ENCODE measurements at regions of chr10 and their contacts with region 1.

Region 1: DNA sequence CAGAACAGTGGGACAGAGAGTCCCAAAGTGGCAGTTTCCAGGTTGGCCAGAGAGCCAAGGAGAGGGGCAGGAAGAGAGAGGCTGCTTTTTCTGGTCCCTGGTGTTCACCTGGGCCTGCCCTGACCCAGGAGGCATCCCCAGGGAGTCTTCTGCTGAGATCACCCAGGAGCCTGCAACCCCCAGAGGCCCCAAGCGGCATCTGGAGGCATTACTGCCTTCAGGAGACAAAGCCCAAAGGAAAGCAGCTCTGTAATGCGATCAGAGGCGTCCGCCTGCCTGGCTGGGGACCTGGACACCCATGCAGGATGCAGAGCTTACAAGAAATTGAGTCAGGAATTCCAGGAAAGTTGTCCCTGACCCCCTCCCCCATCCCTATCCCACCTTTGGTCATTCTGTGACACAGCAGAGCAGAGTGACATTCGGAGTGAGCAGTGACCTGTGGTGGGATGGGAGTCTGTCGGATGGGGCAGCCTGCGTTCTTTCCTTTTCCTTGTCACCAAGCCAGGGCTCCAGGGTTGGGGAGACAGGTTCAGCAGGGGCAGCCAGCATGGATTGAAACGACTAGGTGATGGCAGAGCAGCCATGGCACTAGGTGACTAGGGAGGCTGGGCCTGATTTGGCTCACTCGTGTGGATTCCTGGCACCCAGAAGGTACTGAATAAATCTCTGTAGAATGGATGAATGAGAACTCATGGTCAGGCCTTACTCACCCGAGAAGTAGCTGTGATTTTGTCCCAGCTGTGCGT is 10.4 kb downstream of the UNC5B start:
- DNase-seq: no peak
- H3K4me3 ChIP-seq: no peak overlapping the region
- H3K27ac ChIP-seq: no peak overlapping the region; the same call in 1 of the 2 replicates
- H3K4me1 ChIP-seq: peaks cover 8 to 33% (median 14%) of the 10 kb centered on the region in 4 experiments
- H3K27me3 ChIP-seq: no peaks in the 10 kb centered on the region
- CTCF ChIP-seq: peak; percentile 37 to 47 (median 38)
- EP300 ChIP-seq: no peak
- POLR2A ChIP-seq: no peak
- RAD21 ChIP-seq: peak; percentile 11 to 43; a peak in 2 of 4 replicates

Region 2: DNA sequence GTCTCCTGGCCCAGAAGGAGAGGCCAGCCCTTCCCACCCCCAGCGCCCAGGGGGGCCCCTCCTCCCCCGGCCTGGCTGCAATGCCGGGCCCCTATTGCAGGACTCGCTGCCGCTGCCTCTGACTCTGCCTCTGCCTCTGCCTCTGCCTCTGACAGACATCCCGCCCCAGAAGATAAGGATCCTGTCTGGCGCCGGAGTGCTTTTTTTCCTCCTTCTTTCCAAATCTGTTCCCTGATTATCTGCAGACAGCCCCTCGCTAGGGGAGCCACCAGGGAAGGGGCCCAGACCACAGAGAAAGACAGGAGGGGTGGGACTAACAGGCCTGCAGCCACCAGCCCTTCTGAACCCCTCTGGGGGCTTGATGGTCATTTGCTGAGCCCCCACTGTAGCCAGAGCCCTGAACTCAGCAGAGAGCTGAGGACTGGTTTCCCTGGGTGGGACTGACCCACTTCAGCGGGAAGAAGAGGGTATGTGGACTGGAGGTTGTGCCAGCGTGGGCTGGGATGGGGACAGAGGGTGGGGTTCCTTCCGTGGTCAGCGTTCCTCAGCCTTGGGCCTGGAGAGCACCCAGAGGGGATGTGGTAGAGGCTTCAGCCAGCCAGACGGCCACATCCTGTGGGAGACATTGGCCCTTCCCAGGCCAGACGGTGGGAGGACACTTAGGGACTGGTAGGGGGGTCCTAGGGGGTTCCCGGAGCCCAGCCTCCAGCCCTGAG is 12.4 kb after region 1 on chr10:
- CTCF ChIA-PET with region 1: interaction called, 58 read pairs
- POLR2A ChIA-PET with region 1: interaction called, 13 read pairs
- DNase-seq: no peak
- H3K4me3 ChIP-seq: no peak overlapping the region
- H3K27ac ChIP-seq: no peak overlapping the region
- H3K4me1 ChIP-seq: peaks cover 7 to 17% (median 13%) of the 10 kb centered on the region in 4 experiments
- H3K27me3 ChIP-seq: 0 out of 7 replicates have a peak, but pooled peaks cover 0 to 2% (median 0%) of the 10 kb centered on the region in 4 experiments
- CTCF ChIP-seq: no peak
- EP300 ChIP-seq: no peak
- POLR2A ChIP-seq: no peak
- RAD21 ChIP-seq: no peak

Region 3: GRCh38 chr10:71244431-71245419 is 22.0 kb after region 1 on chr10:
- CTCF ChIA-PET with region 1: interaction called, 16 read pairs
- POLR2A ChIA-PET with region 1: interaction called, 3 read pairs
- DNase-seq: no peak
- H3K4me3 ChIP-seq: no peak overlapping the region
- H3K27ac ChIP-seq: no peak overlapping the region
- H3K4me1 ChIP-seq: peaks cover 0 to 1% (median 0%) of the 10 kb centered on the region in 4 experiments; a peak in 2 of 7 replicates
- H3K27me3 ChIP-seq: no peaks in the 10 kb centered on the region; a peak in 1 of 7 replicates
- CTCF ChIP-seq: no peak
- EP300 ChIP-seq: no peak
- POLR2A ChIP-seq: no peak
- RAD21 ChIP-seq: no peak

Region 4: GRCh38 chr10:71285180-71285545 is 62.4 kb after region 1 on chr10:
- CTCF ChIA-PET with region 1: interaction called, 30 read pairs
- POLR2A ChIA-PET with region 1: no interaction called
- DNase-seq: peak in 1 of 2 experiments; percentile 85
- H3K4me3 ChIP-seq: no peak overlapping the region
- H3K27ac ChIP-seq: no peak overlapping the region
- H3K4me1 ChIP-seq: no peaks in the 10 kb centered on the region
- H3K27me3 ChIP-seq: no peaks in the 10 kb centered on the region
- CTCF ChIP-seq: peak; percentile 80 to 85 (median 85)
- EP300 ChIP-seq: no peak
- POLR2A ChIP-seq: no peak
- RAD21 ChIP-seq: peak; percentile 91

Measured in H1 (cell line).